ENCODE measurements at regions of chr19 and their contacts with region 1.

Region 1: GRCh38 chr19:36528194-36528920 is at the start of gene ZNF260:
- DNase-seq: peak; percentile 97
- H3K4me3 Mint-ChIP-seq: peak within 1 kb of the TSS; percentile 96
- H3K27ac Mint-ChIP-seq: peak within 1 kb of the TSS; percentile 95
- H3K4me1 Mint-ChIP-seq: peaks cover 17% of the 10 kb centered on the region
- H3K27me3 Mint-ChIP-seq: no peaks in the 10 kb centered on the region
- total RNA-seq, gene ZNF260: 6.7 and 8.0 TPM in 2 replicates

Region 2: GRCh38 chr19:35977446-35978222 is 550.7 kb before region 1 on chr19:
- intact Hi-C with region 1: no loop called
- DNase-seq: peak; percentile 67
- H3K4me3 Mint-ChIP-seq: no peak overlapping the region
- H3K27ac Mint-ChIP-seq: no peak overlapping the region
- H3K4me1 Mint-ChIP-seq: no peaks in the 10 kb centered on the region
- H3K27me3 Mint-ChIP-seq: peaks cover 14% of the 10 kb centered on the region

Region 3: GRCh38 chr19:36378625-36379509 is 149.5 kb before region 1 on chr19 and contains the start of gene ZFP14:
- intact Hi-C with region 1: loop called (anchors 1 kb)
- DNase-seq: peak; percentile 98
- H3K4me3 Mint-ChIP-seq: peak within 1 kb of the TSS; percentile 84
- H3K27ac Mint-ChIP-seq: peak within 1 kb of the TSS; percentile 90
- H3K4me1 Mint-ChIP-seq: peaks cover 14% of the 10 kb centered on the region
- H3K27me3 Mint-ChIP-seq: no peaks in the 10 kb centered on the region
- total RNA-seq, gene ZFP14: 2.2 and 3.2 TPM in 2 replicates

Region 4: GRCh38 chr19:36573020-36573885 is 44.9 kb after region 1 on chr19 and contains the start of gene ZNF529:
- intact Hi-C with region 1: loop called (anchors 1 kb)
- DNase-seq: peak; percentile 97
- H3K4me3 Mint-ChIP-seq: peak within 1 kb of the TSS; percentile 89
- H3K27ac Mint-ChIP-seq: peak within 1 kb of the TSS; percentile 95
- H3K4me1 Mint-ChIP-seq: peaks cover 24% of the 10 kb centered on the region
- H3K27me3 Mint-ChIP-seq: no peaks in the 10 kb centered on the region
- total RNA-seq, gene ZNF529: 16.8 and 17.6 TPM in 2 replicates

Region 5: DNA sequence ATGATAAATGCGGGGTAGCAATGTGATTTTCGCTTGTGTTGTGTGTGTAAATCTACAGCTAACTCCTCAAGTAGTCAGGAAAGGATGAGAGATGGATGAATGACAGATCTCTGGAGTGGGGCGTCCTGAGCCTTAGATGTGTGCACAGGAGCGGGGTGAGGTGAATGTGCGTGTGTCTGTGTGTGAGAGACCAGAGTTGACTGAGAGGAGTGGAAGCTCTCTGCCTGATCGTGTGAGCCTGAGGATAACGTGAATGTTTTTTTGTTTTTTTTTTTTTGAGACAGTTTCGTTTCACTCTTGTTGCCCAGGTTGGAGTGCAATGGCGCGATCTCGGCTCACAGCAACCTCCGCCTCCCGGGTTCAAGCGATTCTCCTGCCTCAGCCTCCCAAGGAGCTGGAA is 137.5 kb after region 1 on chr19:
- intact Hi-C with region 1: loop called (anchors 2 kb)
- DNase-seq: no peak
- H3K4me3 Mint-ChIP-seq: peak overlapping the region; percentile 98
- H3K27ac Mint-ChIP-seq: peak overlapping the region; percentile 76
- H3K4me1 Mint-ChIP-seq: peaks cover 23% of the 10 kb centered on the region
- H3K27me3 Mint-ChIP-seq: no peaks in the 10 kb centered on the region

Region 6: DNA sequence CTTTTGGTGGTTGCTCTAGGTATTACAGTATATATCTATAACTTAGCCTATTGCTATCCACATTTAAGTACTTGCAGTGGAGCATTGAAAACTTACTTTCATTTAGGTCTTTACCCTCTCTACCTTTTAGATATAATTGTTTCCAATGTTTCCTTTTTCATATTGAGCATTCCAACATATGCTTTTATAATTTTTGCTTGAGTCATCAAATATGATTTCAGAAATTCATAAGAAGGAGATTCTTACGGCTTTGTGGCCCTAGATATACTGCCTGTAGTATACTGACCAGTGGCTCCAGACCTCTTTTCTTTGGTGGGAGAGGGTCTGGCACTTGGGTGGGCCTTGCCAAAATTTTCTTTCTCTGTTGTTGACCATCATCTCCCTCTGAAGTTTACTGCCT is 277.0 kb after region 1 on chr19:
- intact Hi-C with region 1: no loop called
- DNase-seq: no peak
- H3K4me3 Mint-ChIP-seq: no peak overlapping the region
- H3K27ac Mint-ChIP-seq: no peak overlapping the region
- H3K4me1 Mint-ChIP-seq: no peaks in the 10 kb centered on the region
- H3K27me3 Mint-ChIP-seq: no peaks in the 10 kb centered on the region

Region 7: GRCh38 chr19:36915992-36916830 is 387.9 kb after region 1 on chr19 and contains the starts of genes ZNF568 and ZNF829:
- intact Hi-C with region 1: loop called (anchors 1 kb)
- DNase-seq: peak; percentile 97
- H3K4me3 Mint-ChIP-seq: peak within 1 kb of the TSS; percentile 90
- H3K27ac Mint-ChIP-seq: peak within 1 kb of the TSS; percentile 96
- H3K4me1 Mint-ChIP-seq: peaks cover 19% of the 10 kb centered on the region
- H3K27me3 Mint-ChIP-seq: no peaks in the 10 kb centered on the region
- total RNA-seq, gene ZNF568: 4.4 and 6.1 TPM in 2 replicates
- total RNA-seq, gene ZNF829: 4.8 TPM in 2 replicates

Measured in activated CD4-positive, alpha-beta T cell treated with anti-CD3 and anti-CD28 coated beads, Interleukin-2, amount 10 ng/mL, durations not matched to agents 24 days and 14 days (primary cell).